CD4-positive, alpha-beta T cell (primary cell): ENCODE measurements at regions of chr2 and their contacts with region 1.

Region 1: DNA sequence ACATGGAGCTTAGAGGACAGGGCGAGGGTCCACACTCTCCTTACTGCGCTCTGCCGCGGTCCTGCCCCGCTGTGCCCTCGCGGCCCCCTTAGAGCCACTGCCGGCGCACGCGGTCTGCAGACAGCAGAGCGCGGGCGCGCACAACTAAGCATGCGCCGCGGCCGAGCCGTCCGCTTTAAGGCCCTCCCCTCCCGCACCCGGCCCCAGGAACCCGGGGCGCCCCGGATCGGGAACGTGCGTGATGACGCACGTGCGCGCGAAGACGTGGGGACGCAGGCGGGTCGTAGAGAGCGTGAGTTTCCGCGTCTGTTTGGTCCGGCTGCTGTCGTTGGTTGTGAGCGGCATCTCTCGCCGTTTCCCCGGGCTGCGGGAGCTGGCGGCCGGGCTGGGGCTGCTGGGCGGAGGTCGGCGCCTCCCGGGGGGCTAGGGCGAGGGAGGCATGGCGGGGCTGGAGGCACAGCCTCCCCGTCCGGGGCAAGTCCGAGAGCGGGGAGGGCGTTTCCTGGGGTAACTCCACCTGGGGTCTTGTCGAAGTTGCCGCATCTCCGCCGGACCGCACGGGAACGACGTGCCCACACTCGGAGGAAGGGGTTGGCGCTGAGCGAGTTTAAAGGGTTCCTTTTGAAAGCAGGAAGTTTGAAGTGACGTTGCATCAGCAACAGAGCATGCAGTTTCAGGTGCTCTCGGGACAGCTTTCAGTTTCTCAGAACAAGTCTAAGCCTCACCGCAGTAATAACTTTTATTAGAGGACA is at the start of gene RHBDD1:
- DNase-seq: peak; percentile 86 to 98 (median 93)
- ATAC-seq: peak; percentile 80
- H3K4me3 ChIP-seq: peak within 1 kb of the TSS; percentile 75
- H3K4me3 Mint-ChIP-seq: peak within 1 kb of the TSS; percentile 98
- H3K27ac ChIP-seq: peak within 1 kb of the TSS; percentile 96 to 99
- H3K27ac Mint-ChIP-seq: peak within 1 kb of the TSS; percentile 100
- H3K4me1 ChIP-seq: peaks cover 41% of the 10 kb centered on the region
- H3K4me1 Mint-ChIP-seq: peaks cover 73% of the 10 kb centered on the region
- H3K27me3 ChIP-seq: no peaks in the 10 kb centered on the region
- H3K27me3 Mint-ChIP-seq: no peaks in the 10 kb centered on the region
- CTCF ChIP-seq: no peak
- total RNA-seq, gene RHBDD1: 43.8 to 47.1 TPM

Region 2: GRCh38 chr2:226772389-226773179 is 63.4 kb before region 1 on chr2:
- CTCF ChIA-PET with region 1: no interaction called
- POLR2A ChIA-PET with region 1: interaction called, 16 read pairs
- intact Hi-C with region 1: no loop called
- DNase-seq: peak in 3 of 14 experiments; percentile 26 to 67 (median 42)
- ATAC-seq: peak; percentile 68
- H3K4me3 ChIP-seq: peak overlapping the region; percentile 3
- H3K4me3 Mint-ChIP-seq: peak overlapping the region; percentile 57
- H3K27ac ChIP-seq: no peak overlapping the region
- H3K27ac Mint-ChIP-seq: no peak overlapping the region
- H3K4me1 ChIP-seq: peaks cover 5% of the 10 kb centered on the region
- H3K4me1 Mint-ChIP-seq: peaks cover 28% of the 10 kb centered on the region
- H3K27me3 ChIP-seq: no peaks in the 10 kb centered on the region
- H3K27me3 Mint-ChIP-seq: no peaks in the 10 kb centered on the region
- CTCF ChIP-seq: no peak

Region 3: DNA sequence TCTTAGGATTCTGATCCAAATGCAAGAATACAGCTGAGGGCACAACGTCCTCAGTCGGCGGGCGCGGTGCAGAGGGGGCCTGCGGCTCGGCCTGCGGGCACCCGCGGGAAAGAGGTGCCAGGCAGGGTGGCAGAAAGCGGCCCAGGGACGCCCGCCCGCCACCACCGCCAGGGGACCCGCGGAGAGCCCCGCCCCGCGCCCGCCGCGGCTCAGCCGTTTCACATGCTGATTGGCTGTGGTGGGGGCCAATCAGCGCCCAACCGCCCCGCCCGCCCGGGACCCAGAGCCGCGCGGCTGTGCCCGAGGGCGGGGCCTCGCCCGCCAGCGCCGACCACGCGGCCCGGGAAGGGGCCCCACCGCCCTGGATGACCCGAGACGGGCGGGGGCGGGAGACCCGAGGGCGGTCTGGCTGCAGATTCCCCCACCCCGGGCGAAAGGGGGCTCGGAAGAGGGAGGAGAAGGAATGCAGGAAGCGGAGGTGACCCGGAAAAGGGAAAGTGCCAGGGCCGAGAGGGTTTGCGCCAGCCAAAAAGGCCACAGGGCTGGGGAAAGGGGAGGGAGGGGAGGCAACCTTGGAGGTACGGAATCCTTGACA is 44.4 kb before region 1 on chr2:
- CTCF ChIA-PET with region 1: no interaction called
- POLR2A ChIA-PET with region 1: interaction called, 25 read pairs
- intact Hi-C with region 1: loop called (anchors 1 to 2 kb)
- DNase-seq: peak; percentile 83 to 96 (median 90)
- ATAC-seq: peak; percentile 95
- H3K4me3 ChIP-seq: peak overlapping the region; percentile 77
- H3K4me3 Mint-ChIP-seq: peak overlapping the region; percentile 97
- H3K27ac ChIP-seq: peak overlapping the region; percentile 88 to 91
- H3K27ac Mint-ChIP-seq: peak overlapping the region; percentile 97
- H3K4me1 ChIP-seq: peaks cover 35% of the 10 kb centered on the region
- H3K4me1 Mint-ChIP-seq: peaks cover 31% of the 10 kb centered on the region
- H3K27me3 ChIP-seq: no peaks in the 10 kb centered on the region
- H3K27me3 Mint-ChIP-seq: no peaks in the 10 kb centered on the region
- CTCF ChIP-seq: peak; percentile 40

Region 4: DNA sequence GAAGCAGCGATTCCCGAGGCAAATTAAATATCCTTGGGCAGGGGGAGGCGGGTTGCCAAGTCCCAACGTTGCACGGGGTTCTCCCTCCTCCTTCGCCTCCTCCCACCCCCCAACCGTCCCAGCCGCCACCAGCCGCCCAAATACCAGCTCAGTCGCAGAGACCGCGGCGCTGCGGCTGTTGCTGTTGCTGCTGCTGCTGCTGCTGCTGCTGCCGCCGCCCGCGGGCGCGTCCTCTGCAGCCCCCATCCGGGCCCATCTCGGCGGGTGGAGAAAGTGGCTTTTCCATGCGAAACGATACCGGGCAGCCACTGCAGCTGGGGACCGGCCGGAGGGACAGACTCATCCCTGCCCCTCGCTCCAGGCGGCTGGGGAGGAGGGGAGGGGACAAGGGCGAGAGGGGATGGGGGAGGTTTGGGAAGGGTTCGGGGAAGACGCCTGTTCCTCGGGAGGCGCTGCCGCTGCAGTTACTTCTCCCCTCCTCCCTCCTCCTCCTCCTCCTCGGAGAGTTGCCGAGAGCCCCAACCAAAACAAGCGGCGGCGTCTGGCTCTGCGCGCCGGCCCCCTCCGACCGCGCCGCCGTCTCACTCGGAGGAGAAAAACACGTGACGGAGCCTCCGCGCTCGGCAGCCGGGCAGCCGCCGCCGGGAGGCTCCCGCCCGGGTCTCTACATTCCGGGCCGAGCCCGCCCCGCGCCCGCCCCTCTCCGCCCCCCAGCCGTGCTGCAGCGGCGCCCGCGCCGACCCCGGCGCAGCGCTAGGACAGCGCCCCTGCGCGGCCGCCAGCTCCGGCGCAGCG is 36.6 kb before region 1 on chr2 and contains the start of gene IRS1:
- CTCF ChIA-PET with region 1: interaction called, 10 read pairs
- POLR2A ChIA-PET with region 1: interaction called, 38 read pairs
- intact Hi-C with region 1: loop called (anchors 2 kb)
- DNase-seq: peak; percentile 34 to 86 (median 54)
- ATAC-seq: peak; percentile 66
- H3K4me3 ChIP-seq: peak within 1 kb of the TSS; percentile 74
- H3K4me3 Mint-ChIP-seq: peak within 1 kb of the TSS; percentile 92
- H3K27ac ChIP-seq: peak within 1 kb of the TSS in 1 of 2 donors; percentile 40
- H3K27ac Mint-ChIP-seq: peak within 1 kb of the TSS; percentile 71
- H3K4me1 ChIP-seq: peaks cover 56% of the 10 kb centered on the region
- H3K4me1 Mint-ChIP-seq: peaks cover 24% of the 10 kb centered on the region
- H3K27me3 ChIP-seq: peaks cover 0 to 10% of the 10 kb centered on the region in 2 experiments
- H3K27me3 Mint-ChIP-seq: peaks cover 6% of the 10 kb centered on the region
- CTCF ChIP-seq: no peak
- total RNA-seq, gene IRS1: 2.9 TPM

Region 5: GRCh38 chr2:226971084-226971483 is 135.1 kb after region 1 on chr2:
- CTCF ChIA-PET with region 1: no interaction called
- POLR2A ChIA-PET with region 1: no interaction called
- intact Hi-C with region 1: loop called in 1 of 2 experiments (anchors 5 kb)
- DNase-seq: no peak
- ATAC-seq: no peak
- H3K4me3 ChIP-seq: no peak overlapping the region
- H3K4me3 Mint-ChIP-seq: peak overlapping the region; percentile 14
- H3K27ac ChIP-seq: no peak overlapping the region
- H3K27ac Mint-ChIP-seq: peak overlapping the region; percentile 38
- H3K4me1 ChIP-seq: no peaks in the 10 kb centered on the region
- H3K4me1 Mint-ChIP-seq: peaks cover 45% of the 10 kb centered on the region
- H3K27me3 ChIP-seq: no peaks in the 10 kb centered on the region
- H3K27me3 Mint-ChIP-seq: no peaks in the 10 kb centered on the region
- CTCF ChIP-seq: no peak

Region 6: DNA sequence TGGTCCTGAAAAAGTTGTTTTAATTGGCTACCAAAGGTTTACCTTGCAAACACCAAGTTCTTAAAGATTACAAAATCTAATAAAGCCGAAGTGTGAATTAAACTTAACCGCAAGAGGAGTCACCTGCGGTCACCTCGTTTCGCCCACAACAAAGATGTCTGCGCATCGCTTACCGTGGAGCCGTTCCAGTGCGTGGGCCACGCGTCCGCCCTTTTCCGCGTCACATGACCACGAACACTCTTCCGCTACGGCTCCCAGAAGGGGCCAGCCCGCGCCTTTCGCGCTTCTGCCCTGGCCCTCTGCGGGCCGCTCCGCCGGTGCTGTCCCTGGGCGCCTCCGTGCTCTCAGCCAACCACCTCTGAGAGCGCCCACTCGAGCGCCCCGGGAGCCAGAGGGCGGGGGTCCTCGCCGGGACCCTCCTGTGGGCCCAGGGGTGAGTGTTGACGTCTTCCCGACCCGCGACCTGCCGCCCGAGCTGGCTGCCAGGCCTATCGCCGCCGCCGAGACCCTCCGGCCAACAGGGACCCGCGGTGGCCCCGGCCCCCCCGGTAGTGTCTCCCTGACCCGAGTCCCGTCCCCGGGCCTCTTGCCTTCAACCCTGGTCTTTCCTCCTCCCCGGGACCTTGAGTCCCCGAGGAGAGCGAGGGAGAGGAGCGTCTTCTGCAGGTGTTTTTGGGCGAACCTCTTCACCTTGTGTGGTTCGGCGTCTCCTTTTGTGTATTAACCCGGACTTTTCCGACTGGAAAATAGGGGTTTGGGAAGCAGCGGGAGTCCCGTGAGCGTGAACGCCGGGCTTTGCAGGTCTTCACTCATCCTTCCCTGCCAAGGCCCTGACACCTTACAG is 489.2 kb after region 1 on chr2 and contains the start of gene MFF:
- CTCF ChIA-PET with region 1: no interaction called
- POLR2A ChIA-PET with region 1: interaction called, 5 read pairs
- intact Hi-C with region 1: loop called (anchors 5 kb)
- DNase-seq: peak; percentile 84 to 97 (median 90)
- ATAC-seq: peak; percentile 97
- H3K4me3 ChIP-seq: peak within 1 kb of the TSS; percentile 82
- H3K4me3 Mint-ChIP-seq: peak within 1 kb of the TSS; percentile 94
- H3K27ac ChIP-seq: peak within 1 kb of the TSS; percentile 33 to 51
- H3K27ac Mint-ChIP-seq: peak within 1 kb of the TSS; percentile 92
- H3K4me1 ChIP-seq: peaks cover 22% of the 10 kb centered on the region
- H3K4me1 Mint-ChIP-seq: peaks cover 57% of the 10 kb centered on the region
- H3K27me3 ChIP-seq: no peaks in the 10 kb centered on the region
- H3K27me3 Mint-ChIP-seq: no peaks in the 10 kb centered on the region
- CTCF ChIP-seq: peak; percentile 36
- total RNA-seq, gene MFF: 46.9 to 51.8 TPM

Region 7: GRCh38 chr2:227471924-227472264 is 635.9 kb after region 1 on chr2 and contains the start of gene AGFG1:
- CTCF ChIA-PET with region 1: no interaction called
- POLR2A ChIA-PET with region 1: no interaction called
- intact Hi-C with region 1: loop called in 1 of 2 experiments (anchors 10 kb)
- DNase-seq: peak; percentile 69 to 90 (median 83)
- ATAC-seq: peak; percentile 84
- H3K4me3 ChIP-seq: peak within 1 kb of the TSS; percentile 69
- H3K4me3 Mint-ChIP-seq: peak within 1 kb of the TSS; percentile 96
- H3K27ac ChIP-seq: peak within 1 kb of the TSS in 1 of 2 donors; percentile 41
- H3K27ac Mint-ChIP-seq: peak within 1 kb of the TSS; percentile 91
- H3K4me1 ChIP-seq: peaks cover 18% of the 10 kb centered on the region
- H3K4me1 Mint-ChIP-seq: peaks cover 64% of the 10 kb centered on the region
- H3K27me3 ChIP-seq: no peaks in the 10 kb centered on the region
- H3K27me3 Mint-ChIP-seq: no peaks in the 10 kb centered on the region
- CTCF ChIP-seq: peak; percentile 98
- total RNA-seq, gene AGFG1: 49.9 to 55.9 TPM